ENCODE measurements at regions of chr17 and their contacts with region 1.

Region 1: DNA sequence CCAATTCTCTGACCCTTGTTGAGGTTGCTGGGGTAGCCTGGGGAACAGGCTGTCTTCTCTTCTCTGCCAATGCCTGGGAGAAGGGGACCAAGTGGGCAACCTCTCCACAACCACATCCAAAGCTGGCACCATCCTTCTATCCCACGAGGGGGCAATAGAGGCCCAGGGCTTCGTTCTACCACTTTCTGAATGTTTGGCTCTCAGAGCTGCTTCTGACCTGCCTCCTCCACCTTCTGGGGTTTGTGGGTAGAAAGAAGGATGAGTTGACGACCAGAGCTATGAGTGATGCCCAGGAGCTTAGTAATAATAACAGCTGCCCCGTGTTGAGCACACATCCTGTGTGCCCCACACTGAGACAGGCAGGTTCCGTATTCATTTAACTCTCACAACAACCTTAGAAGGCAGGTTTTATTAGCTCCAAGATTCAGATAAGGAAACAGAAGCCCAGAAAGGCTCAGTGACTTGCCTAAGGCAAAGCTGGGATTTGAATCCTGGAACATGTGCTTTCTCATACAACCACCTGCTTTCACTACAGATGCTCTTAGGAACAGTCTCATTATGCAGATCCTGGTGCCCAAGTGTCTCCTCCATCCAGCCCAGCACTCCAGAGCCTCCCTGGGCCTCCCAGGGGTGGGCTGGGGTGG is 11.1 kb downstream of the TSPOAP1 start:
- DNase-seq: peak; percentile 86
- ATAC-seq: peak; percentile 100
- H3K4me3 Mint-ChIP-seq: no peak overlapping the region
- H3K27ac Mint-ChIP-seq: peak overlapping the region; percentile 72
- H3K4me1 Mint-ChIP-seq: peaks cover 14% of the 10 kb centered on the region
- H3K27me3 Mint-ChIP-seq: no peaks in the 10 kb centered on the region

Region 2: GRCh38 chr17:58289869-58290268 is 27.7 kb before region 1 on chr17:
- CTCF ChIA-PET with region 1: no interaction called
- POLR2A ChIA-PET with region 1: no interaction called
- intact Hi-C with region 1: no loop called
- DNase-seq: no peak
- ATAC-seq: no peak
- H3K4me3 Mint-ChIP-seq: no peak overlapping the region
- H3K27ac Mint-ChIP-seq: no peak overlapping the region
- H3K4me1 Mint-ChIP-seq: no peaks in the 10 kb centered on the region
- H3K27me3 Mint-ChIP-seq: peaks cover 10% of the 10 kb centered on the region

Region 3: DNA sequence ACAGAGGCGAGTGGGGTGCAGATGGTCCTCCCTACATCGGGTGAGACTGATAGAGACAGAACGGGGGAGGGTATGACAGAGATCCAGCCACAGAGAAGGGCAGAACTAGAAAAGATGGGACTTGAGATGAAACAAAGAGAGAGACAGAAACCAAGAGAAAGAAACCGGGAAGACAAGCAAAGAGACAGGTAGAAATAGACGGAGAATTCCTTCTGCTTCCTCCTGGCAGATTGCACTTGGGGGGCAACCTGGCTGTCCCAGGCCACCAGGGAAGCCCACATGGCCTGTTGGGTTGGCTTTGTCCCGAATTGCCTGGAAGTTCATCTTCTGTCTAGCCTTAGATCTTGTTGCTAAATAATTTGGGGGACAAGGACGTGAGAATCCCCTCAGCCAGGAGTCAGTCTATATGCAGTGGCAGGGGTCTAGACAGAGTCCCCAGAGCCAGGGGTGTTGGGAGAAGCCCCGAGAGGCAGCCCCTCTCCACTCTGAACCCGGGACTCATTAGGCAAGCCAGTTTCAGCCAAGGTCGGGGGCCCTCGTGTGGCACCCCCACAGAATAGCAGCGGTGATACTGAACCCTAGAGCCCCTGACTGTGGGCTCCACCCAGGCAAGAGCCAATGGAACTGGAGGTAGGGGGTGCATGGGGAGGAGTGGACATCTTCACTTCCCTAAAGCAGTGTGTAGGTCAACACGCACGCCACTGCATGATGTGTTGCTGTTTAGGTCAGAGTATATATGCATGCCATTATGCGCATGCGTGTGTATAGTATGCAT is 11.7 kb after region 1 on chr17:
- CTCF ChIA-PET with region 1: interaction called, 36 read pairs
- POLR2A ChIA-PET with region 1: interaction called, 24 read pairs
- intact Hi-C with region 1: loop called (anchors 1 kb)
- DNase-seq: peak; percentile 93
- ATAC-seq: peak; percentile 43
- H3K4me3 Mint-ChIP-seq: peak overlapping the region; percentile 100
- H3K27ac Mint-ChIP-seq: peak overlapping the region; percentile 93
- H3K4me1 Mint-ChIP-seq: peaks cover 39% of the 10 kb centered on the region
- H3K27me3 Mint-ChIP-seq: peaks cover 2% of the 10 kb centered on the region

Region 4: GRCh38 chr17:58344047-58344790 is 26.7 kb after region 1 on chr17:
- CTCF ChIA-PET with region 1: interaction called, 60 read pairs
- POLR2A ChIA-PET with region 1: interaction called, 38 read pairs
- intact Hi-C with region 1: loop called (anchors 1 kb)
- DNase-seq: peak; percentile 95
- ATAC-seq: peak; percentile 76
- H3K4me3 Mint-ChIP-seq: peak overlapping the region; percentile 100
- H3K27ac Mint-ChIP-seq: peak overlapping the region; percentile 99
- H3K4me1 Mint-ChIP-seq: peaks cover 74% of the 10 kb centered on the region
- H3K27me3 Mint-ChIP-seq: no peaks in the 10 kb centered on the region

Region 5: GRCh38 chr17:58382108-58382871 is 64.7 kb after region 1 on chr17:
- CTCF ChIA-PET with region 1: interaction called, 13 read pairs
- POLR2A ChIA-PET with region 1: no interaction called
- intact Hi-C with region 1: no loop called
- DNase-seq: no peak
- ATAC-seq: peak; percentile 90
- H3K4me3 Mint-ChIP-seq: no peak overlapping the region
- H3K27ac Mint-ChIP-seq: peak overlapping the region; percentile 44
- H3K4me1 Mint-ChIP-seq: peaks cover 36% of the 10 kb centered on the region
- H3K27me3 Mint-ChIP-seq: no peaks in the 10 kb centered on the region

Region 6: DNA sequence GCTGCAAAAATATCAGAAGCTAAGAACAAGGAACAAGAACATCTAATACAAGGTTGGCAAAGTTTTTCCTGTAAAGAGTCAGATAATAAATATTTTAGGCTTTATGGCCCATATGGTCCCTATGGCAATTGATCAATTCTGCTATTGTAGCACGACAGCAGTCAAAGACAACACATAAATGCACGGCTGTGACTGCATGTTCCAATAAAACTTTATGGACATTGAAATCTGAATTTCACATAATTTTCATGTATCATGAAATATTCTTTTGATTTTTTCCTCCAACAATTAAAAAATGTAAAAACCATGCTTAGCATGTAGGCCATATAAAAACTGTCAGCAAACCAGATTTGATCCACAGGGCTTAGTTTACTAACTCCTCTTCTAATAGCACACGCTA is 110.3 kb after region 1 on chr17:
- CTCF ChIA-PET with region 1: interaction called, 18 read pairs
- POLR2A ChIA-PET with region 1: no interaction called
- intact Hi-C with region 1: no loop called
- DNase-seq: no peak
- ATAC-seq: no peak
- H3K4me3 Mint-ChIP-seq: no peak overlapping the region
- H3K27ac Mint-ChIP-seq: no peak overlapping the region
- H3K4me1 Mint-ChIP-seq: no peaks in the 10 kb centered on the region
- H3K27me3 Mint-ChIP-seq: no peaks in the 10 kb centered on the region

Region 7: DNA sequence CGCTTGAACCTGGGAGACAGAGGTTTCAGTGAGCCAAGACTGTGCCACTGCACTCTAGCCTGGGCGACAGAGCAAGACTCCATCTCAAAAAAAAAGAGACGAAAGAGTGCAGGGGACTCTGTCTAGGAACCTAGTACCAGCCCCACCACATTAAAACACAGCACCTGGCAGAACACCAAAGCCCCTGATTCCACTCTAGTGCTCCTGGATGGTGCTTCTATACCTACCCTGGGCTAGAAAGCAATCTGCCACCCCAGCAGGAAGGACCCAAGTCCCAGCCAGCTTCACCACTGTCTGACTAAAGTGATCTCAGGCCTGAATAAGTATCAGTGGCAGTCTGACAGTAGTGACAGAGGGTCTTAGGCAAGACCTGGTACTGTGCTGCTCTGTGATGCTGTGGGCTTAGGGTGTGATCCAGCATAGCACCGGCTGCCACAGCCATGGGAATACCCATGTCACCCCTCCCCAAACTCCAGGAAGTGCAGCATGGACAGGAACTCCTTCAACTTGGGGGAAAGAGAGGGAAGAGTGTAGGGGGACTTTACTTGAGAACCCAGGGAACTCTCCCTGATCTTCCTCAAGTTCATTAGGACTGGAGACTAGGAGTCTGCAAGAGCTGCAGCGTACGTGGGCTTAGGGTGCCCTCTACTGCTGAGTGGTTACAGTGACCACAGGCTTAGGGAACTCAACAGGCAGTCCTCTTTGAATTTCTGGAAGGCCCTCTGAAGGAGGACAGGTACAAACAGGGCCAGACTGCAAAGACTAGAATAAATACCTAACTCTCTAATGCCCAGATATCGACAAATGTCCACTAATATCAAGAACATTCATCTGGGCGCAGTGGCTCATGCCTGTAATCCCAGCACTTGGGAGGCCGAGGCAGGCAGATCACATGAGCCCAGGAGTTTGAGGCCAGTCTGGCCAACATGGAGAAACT is 129.8 kb after region 1 on chr17:
- CTCF ChIA-PET with region 1: interaction called, 44 read pairs
- POLR2A ChIA-PET with region 1: no interaction called
- intact Hi-C with region 1: loop called (anchors 1 kb)
- DNase-seq: peak; percentile 86
- ATAC-seq: peak; percentile 99
- H3K4me3 Mint-ChIP-seq: no peak overlapping the region
- H3K27ac Mint-ChIP-seq: peak overlapping the region; percentile 21
- H3K4me1 Mint-ChIP-seq: peaks cover 3% of the 10 kb centered on the region
- H3K27me3 Mint-ChIP-seq: no peaks in the 10 kb centered on the region

Region 8: DNA sequence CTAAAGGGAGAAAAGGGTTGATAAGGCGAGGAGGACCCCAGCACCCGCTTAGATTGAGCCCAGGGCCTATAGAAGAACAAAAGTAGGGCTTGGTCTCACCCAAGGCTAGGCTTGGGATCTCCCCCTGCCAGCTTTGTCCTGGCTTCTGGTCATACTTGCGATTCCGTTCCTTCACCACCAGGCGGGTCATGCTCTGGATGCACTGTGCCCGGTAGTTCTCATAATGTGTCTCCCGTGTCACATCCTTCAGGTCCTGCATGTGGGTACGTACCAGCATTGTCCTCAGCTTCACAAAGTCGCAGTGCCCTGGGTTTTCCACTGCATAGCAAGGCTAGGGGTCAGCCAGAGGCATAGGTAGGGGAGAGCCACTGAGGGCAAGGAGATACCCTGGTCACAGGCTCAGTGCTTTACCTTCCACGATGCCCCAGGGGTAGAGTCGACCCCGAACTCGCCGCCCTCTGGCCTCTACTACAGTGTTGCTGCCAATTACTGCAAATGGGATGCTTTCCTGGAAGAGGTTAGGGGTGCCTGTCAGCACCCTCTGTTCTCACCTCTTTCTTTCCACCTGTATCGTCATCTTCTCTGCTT is 203.4 kb after region 1 on chr17:
- CTCF ChIA-PET with region 1: no interaction called
- POLR2A ChIA-PET with region 1: no interaction called
- intact Hi-C with region 1: no loop called
- DNase-seq: peak; percentile 47
- ATAC-seq: no peak
- H3K4me3 Mint-ChIP-seq: no peak overlapping the region
- H3K27ac Mint-ChIP-seq: no peak overlapping the region
- H3K4me1 Mint-ChIP-seq: peaks cover 16% of the 10 kb centered on the region
- H3K27me3 Mint-ChIP-seq: no peaks in the 10 kb centered on the region

Region 9: DNA sequence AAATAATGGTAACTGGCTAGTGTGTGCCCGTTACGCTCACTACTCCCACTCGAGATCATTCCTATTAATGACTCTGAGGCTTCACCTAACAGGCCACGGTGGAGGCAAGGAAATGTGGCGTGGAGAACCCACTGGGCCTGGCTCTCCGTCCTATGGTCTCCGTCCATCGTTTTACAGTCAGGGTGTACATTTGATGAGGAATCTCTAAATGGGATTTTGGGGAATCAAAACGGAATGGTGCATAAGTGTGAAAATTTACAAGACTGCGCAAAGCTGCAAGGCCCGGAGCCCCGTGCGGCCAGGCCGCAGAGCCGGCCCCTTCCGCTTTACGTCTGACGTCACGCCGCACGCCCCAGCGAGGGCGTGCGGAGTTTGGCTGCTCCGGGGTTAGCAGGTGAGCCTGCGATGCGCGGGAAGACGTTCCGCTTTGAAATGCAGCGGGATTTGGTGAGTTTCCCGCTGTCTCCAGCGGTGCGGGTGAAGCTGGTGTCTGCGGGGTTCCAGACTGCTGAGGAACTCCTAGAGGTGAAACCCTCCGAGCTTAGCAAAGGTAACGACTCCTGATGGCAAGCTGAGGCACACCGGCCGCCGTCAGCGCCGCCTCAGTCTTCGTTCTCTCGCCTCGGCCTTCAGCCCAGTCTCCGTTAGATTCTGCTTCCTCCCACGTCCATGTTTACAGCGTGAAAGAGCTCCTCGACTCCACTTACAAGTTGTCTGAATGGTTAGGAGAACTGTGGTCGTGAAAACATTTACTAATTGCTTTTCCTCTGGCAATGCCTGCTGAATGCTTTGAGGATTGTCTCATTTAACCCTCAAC is 374.9 kb after region 1 on chr17 and contains the start of gene RAD51C:
- CTCF ChIA-PET with region 1: no interaction called
- POLR2A ChIA-PET with region 1: no interaction called
- intact Hi-C with region 1: no loop called
- DNase-seq: peak; percentile 94
- ATAC-seq: peak; percentile 96
- H3K4me3 Mint-ChIP-seq: peak within 1 kb of the TSS; percentile 92
- H3K27ac Mint-ChIP-seq: peak within 1 kb of the TSS; percentile 98
- H3K4me1 Mint-ChIP-seq: peaks cover 27% of the 10 kb centered on the region
- H3K27me3 Mint-ChIP-seq: no peaks in the 10 kb centered on the region
- total RNA-seq, gene RAD51C: 85.4 to 87.2 TPM

Region 10: GRCh38 chr17:59004338-59005111 is 687.0 kb after region 1 on chr17:
- CTCF ChIA-PET with region 1: no interaction called
- POLR2A ChIA-PET with region 1: no interaction called
- intact Hi-C with region 1: loop called in 1 of 2 experiments (anchors 10 kb)
- DNase-seq: peak; percentile 81
- ATAC-seq: no peak
- H3K4me3 Mint-ChIP-seq: no peak overlapping the region
- H3K27ac Mint-ChIP-seq: peak overlapping the region; percentile 55
- H3K4me1 Mint-ChIP-seq: peaks cover 34% of the 10 kb centered on the region
- H3K27me3 Mint-ChIP-seq: no peaks in the 10 kb centered on the region

Region 11: GRCh38 chr17:59688008-59688407 is 1370.5 kb after region 1 on chr17:
- CTCF ChIA-PET with region 1: no interaction called
- POLR2A ChIA-PET with region 1: no interaction called
- intact Hi-C with region 1: no loop called
- DNase-seq: no peak
- ATAC-seq: peak; percentile 76
- H3K4me3 Mint-ChIP-seq: no peak overlapping the region
- H3K27ac Mint-ChIP-seq: peak overlapping the region; percentile 83
- H3K4me1 Mint-ChIP-seq: peaks cover 20% of the 10 kb centered on the region
- H3K27me3 Mint-ChIP-seq: no peaks in the 10 kb centered on the region

Measured in activated CD4-positive, alpha-beta T cell treated with anti-CD3 and anti-CD28 coated beads for 36 hours (primary cell).